ENCODE measurements at regions of chr13 and their contacts with region 1.

Region 1: DNA sequence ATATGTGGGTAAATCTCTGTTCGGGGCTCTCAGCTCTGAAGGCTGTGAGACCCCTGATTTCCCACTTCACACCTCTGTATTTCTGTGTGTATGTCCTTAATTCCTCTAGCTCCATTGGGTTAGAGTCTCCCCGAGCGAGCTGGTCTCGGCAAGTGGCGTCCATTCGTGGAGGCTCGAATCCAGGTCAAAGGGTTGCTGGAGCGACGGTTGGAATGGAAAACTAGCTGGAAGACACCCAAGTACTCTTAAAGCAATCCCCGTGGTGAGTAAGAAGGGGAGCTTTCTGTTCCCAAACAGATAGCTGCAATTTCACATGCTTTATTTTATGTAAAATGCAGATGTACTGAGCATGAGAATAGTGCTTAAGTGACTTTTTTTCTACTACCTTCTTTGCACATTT is 277.5 kb upstream of the SGCG start:
- DNase-seq: no peak
- ATAC-seq: no peak
- H3K4me3 ChIP-seq: no peak overlapping the region
- H3K27ac ChIP-seq: no peak overlapping the region
- H3K4me1 ChIP-seq: no peaks in the 10 kb centered on the region
- H3K27me3 ChIP-seq: no peaks in the 10 kb centered on the region
- CTCF ChIP-seq: no peak
- EP300 ChIP-seq: no peak
- POLR2A ChIP-seq: no peak
- RAD21 ChIP-seq: no peak

Region 2: GRCh38 chr13:22812794-22813193 is 90.5 kb before region 1 on chr13:
- CTCF ChIA-PET with region 1: no interaction called
- POLR2A ChIA-PET with region 1: no interaction called
- RAD21 ChIA-PET with region 1: no interaction called
- SMC1A ChIA-PET with region 1: no interaction called
- in situ Hi-C with region 1: no loop called
- intact Hi-C with region 1: loop called (anchors 5 kb)
- DNase-seq: no peak
- ATAC-seq: no peak
- H3K4me3 ChIP-seq: no peak overlapping the region
- H3K27ac ChIP-seq: no peak overlapping the region
- H3K4me1 ChIP-seq: no peaks in the 10 kb centered on the region
- H3K27me3 ChIP-seq: no peaks in the 10 kb centered on the region
- CTCF ChIP-seq: no peak
- EP300 ChIP-seq: no peak
- POLR2A ChIP-seq: no peak
- RAD21 ChIP-seq: no peak

Region 3: DNA sequence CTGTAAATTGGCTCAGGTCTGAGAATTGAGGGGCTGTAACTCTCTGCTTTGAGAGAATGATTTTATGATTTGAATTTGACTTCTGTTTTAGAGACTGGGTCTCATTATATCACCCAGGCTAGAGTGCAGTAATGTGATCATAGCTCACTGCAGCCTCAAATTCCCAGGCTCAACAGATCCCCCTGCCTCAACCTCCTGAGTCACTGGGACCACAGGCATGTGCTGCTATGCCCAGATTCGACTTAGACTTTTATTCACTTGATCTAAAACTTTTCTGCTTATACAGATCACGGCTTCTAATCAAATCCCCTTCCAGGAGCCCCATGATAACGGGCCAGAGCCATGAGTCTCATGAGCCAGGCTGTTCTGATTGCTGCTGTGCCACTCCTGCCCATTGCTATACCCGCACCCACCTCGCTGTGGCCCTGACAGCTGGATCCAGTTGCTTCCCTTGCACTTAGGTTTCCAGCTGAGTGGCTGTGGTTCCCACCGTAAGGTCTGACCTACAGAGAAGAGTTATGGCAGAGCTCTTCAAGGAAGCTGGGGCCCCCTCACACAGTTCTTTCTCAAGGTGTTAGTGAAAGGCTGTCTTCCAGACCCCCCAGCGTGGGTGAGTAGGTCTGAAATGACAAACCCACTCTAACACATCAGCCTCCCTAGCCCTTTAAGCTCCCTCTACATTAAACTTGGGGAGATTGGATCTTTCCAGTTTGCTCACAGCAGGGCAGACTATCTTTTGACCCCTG is 26.3 kb after region 1 on chr13:
- CTCF ChIA-PET with region 1: no interaction called
- POLR2A ChIA-PET with region 1: no interaction called
- RAD21 ChIA-PET with region 1: no interaction called
- SMC1A ChIA-PET with region 1: no interaction called
- in situ Hi-C with region 1: no loop called
- intact Hi-C with region 1: no loop called
- DNase-seq: no peak
- ATAC-seq: no peak
- H3K4me3 ChIP-seq: no peak overlapping the region
- H3K27ac ChIP-seq: no peak overlapping the region
- H3K4me1 ChIP-seq: no peaks in the 10 kb centered on the region
- H3K27me3 ChIP-seq: no peaks in the 10 kb centered on the region
- CTCF ChIP-seq: no peak
- EP300 ChIP-seq: no peak
- POLR2A ChIP-seq: no peak
- RAD21 ChIP-seq: no peak

Region 4: DNA sequence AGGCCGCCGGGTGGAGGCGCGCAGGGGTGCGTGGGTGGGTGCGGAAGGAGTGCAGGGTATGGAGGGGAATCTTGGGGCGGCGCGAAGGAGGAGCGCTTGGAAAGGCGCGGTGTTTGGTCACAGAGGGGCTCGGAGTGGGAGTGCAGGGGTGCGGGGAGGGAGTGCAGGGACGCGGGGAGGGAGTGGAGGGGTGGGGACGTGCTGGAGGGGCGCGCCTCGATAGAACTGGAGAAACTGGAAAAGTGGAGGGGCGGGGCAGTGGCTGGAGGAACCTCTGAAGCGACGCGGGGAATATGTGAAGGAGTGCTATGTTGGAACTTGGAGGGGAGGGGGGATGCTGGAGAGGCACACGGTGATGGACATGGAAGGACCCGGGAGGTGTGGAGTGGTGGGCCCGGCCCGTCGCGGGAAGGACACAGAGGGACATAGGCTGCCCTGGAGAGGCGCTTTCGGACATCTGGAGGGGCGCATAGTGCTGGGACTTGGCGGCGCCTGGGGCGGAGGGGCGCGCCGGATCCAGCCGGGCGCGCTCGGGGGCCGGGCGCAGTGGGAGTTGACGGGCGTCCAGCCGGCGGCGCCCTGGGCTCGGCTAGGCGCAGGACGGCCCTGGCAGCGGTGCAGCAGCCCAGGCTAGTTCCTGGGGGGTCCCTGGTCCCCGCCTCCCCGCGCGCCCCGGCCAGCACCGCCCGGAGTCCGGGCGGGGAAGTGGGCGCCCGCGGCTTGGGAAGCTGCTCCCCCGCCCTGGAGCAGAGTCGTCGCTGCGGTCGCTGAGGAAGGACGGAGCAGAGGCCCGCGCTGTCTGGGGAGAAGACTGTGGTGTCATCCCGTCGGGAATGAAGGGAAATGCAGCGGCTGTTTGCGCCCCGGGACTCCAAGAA is 256.7 kb after region 1 on chr13:
- CTCF ChIA-PET with region 1: no interaction called
- POLR2A ChIA-PET with region 1: no interaction called
- RAD21 ChIA-PET with region 1: no interaction called
- SMC1A ChIA-PET with region 1: no interaction called
- in situ Hi-C with region 1: no loop called
- intact Hi-C with region 1: no loop called
- DNase-seq: no peak
- ATAC-seq: no peak
- H3K4me3 ChIP-seq: no peak overlapping the region
- H3K27ac ChIP-seq: no peak overlapping the region
- H3K4me1 ChIP-seq: no peaks in the 10 kb centered on the region
- H3K27me3 ChIP-seq: peaks cover 0 to 4% of the 10 kb centered on the region in 2 experiments; a peak in 2 of 4 replicates
- CTCF ChIP-seq: no peak
- EP300 ChIP-seq: no peak
- POLR2A ChIP-seq: no peak
- RAD21 ChIP-seq: no peak

Measured in GM12878 (cell line).